ENCODE measurements at regions of chr5 and their contacts with region 1.

Region 1: DNA sequence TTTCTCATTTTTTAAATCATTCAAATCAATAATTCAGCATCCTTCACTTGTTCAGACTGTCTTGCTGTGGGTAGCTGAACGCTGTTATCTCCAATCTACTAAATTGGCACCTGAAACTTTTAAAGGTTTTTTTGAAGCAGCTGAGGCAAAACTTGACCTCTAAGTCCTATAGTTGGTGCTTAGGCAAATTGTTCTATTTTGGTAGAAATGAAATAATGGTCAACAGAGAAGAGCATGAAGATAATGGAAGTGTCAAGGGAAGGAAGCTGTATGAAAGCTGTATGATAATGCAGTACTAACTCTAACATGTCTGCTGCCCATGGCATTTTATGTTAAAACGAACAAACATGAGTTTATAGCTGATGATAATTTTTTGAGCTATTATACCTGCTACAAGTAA is 138.0 kb downstream of the GDNF start:
- DNase-seq: no peak
- H3K4me3 ChIP-seq: no peak overlapping the region
- H3K27ac ChIP-seq: no peak overlapping the region
- H3K4me1 ChIP-seq: peaks cover 11% of the 10 kb centered on the region
- H3K27me3 ChIP-seq: no peaks in the 10 kb centered on the region
- CTCF ChIP-seq: no peak

Region 2: GRCh38 chr5:37757980-37758583 is 56.2 kb after region 1 on chr5:
- CTCF ChIA-PET with region 1: no interaction called
- POLR2A ChIA-PET with region 1: interaction called, 13 read pairs
- intact Hi-C with region 1: no loop called
- DNase-seq: no peak
- H3K4me3 ChIP-seq: no peak overlapping the region
- H3K27ac ChIP-seq: no peak overlapping the region
- H3K4me1 ChIP-seq: no peaks in the 10 kb centered on the region
- H3K27me3 ChIP-seq: no peaks in the 10 kb centered on the region
- CTCF ChIP-seq: no peak

Measured in PC-9 (cell line).